MCF 10A (cell line): ENCODE measurements at regions of chr2 and their contacts with region 1.

Region 1: GRCh38 chr2:88739985-88740600 is 48.6 kb downstream of the RPIA start:
- DNase-seq: peak; percentile 75
- H3K4me3 Mint-ChIP-seq: no peak overlapping the region
- H3K27ac Mint-ChIP-seq: no peak overlapping the region
- H3K4me1 Mint-ChIP-seq: no peaks in the 10 kb centered on the region
- H3K27me3 Mint-ChIP-seq: no peaks in the 10 kb centered on the region
- CTCF ChIP-seq: peak; percentile 85

Region 2: GRCh38 chr2:88711903-88712302 is 28.2 kb before region 1 on chr2:
- CTCF ChIA-PET with region 1: interaction called, 12 read pairs
- POLR2A ChIA-PET with region 1: no interaction called
- intact Hi-C with region 1: no loop called
- DNase-seq: no peak
- H3K4me3 Mint-ChIP-seq: no peak overlapping the region
- H3K27ac Mint-ChIP-seq: no peak overlapping the region
- H3K4me1 Mint-ChIP-seq: no peaks in the 10 kb centered on the region
- H3K27me3 Mint-ChIP-seq: no peaks in the 10 kb centered on the region
- CTCF ChIP-seq: no peak

Region 3: GRCh38 chr2:88729061-88729745 is 10.9 kb before region 1 on chr2:
- CTCF ChIA-PET with region 1: interaction called, 12 read pairs
- POLR2A ChIA-PET with region 1: no interaction called
- intact Hi-C with region 1: no loop called
- DNase-seq: no peak
- H3K4me3 Mint-ChIP-seq: no peak overlapping the region
- H3K27ac Mint-ChIP-seq: peak overlapping the region; percentile 36
- H3K4me1 Mint-ChIP-seq: peaks cover 6% of the 10 kb centered on the region
- H3K27me3 Mint-ChIP-seq: no peaks in the 10 kb centered on the region
- CTCF ChIP-seq: no peak

Region 4: DNA sequence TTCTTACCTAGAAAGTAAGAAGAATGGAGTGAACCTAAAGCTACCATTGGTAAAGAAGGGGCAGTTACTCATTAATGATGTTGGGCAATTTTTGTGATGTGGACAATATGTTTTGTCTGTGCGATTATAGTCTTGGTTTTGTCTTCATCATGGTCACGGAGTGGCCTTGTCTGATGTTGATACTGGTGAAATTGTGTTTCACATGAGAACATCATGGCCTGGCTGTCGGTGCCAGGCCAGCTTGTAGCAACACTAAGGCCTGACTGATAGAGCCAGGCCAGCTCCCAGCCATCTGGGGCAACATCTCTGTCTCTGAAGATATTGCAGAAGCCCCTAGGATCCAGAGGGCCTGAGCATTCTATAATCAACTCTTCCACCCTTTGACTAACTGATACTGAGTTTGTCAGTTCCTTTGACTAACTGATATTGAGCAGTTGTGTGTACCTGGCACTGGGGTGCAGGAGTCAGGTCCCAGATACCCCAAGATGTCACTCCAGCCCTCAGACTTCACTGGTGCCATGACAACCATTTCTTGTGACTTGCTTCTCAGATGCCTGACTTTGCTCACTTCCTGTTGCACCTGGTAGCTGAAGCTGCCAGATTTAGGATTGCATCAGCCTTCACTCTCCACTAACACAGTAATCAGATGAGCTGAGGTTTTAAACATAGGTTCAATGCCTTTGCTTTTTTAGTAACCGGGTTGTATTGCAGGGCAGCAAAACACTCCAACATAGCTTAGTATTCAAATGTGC is 13.9 kb after region 1 on chr2:
- CTCF ChIA-PET with region 1: interaction called, 49 read pairs
- POLR2A ChIA-PET with region 1: interaction called, 3 read pairs
- intact Hi-C with region 1: no loop called
- DNase-seq: peak; percentile 23
- H3K4me3 Mint-ChIP-seq: no peak overlapping the region
- H3K27ac Mint-ChIP-seq: peak overlapping the region; percentile 24
- H3K4me1 Mint-ChIP-seq: peaks cover 8% of the 10 kb centered on the region
- H3K27me3 Mint-ChIP-seq: no peaks in the 10 kb centered on the region
- CTCF ChIP-seq: no peak

Region 5: GRCh38 chr2:88874063-88874657 is 134.1 kb after region 1 on chr2:
- CTCF ChIA-PET with region 1: interaction called, 9 read pairs
- POLR2A ChIA-PET with region 1: no interaction called
- intact Hi-C with region 1: loop called (anchors 1 kb)
- DNase-seq: peak; percentile 73
- H3K4me3 Mint-ChIP-seq: no peak overlapping the region
- H3K27ac Mint-ChIP-seq: no peak overlapping the region
- H3K4me1 Mint-ChIP-seq: no peaks in the 10 kb centered on the region
- H3K27me3 Mint-ChIP-seq: peaks cover 86% of the 10 kb centered on the region
- CTCF ChIP-seq: peak; percentile 77

Region 6: GRCh38 chr2:88919087-88919738 is 179.1 kb after region 1 on chr2:
- CTCF ChIA-PET with region 1: interaction called, 6 read pairs
- POLR2A ChIA-PET with region 1: no interaction called
- intact Hi-C with region 1: loop called (anchors 5 kb)
- DNase-seq: peak; percentile 46
- H3K4me3 Mint-ChIP-seq: no peak overlapping the region
- H3K27ac Mint-ChIP-seq: peak overlapping the region; percentile 35
- H3K4me1 Mint-ChIP-seq: no peaks in the 10 kb centered on the region
- H3K27me3 Mint-ChIP-seq: peaks cover 64% of the 10 kb centered on the region
- CTCF ChIP-seq: peak; percentile 48